Right cardiac atrium (tissue), 5 donors: ENCODE measurements at regions of chrX and their contacts with region 1.

Region 1: GRCh38 chrX:68828740-68829552 is at the start of gene EFNB1:
- DNase-seq: peak; percentile 93 to 97 (median 96)
- ATAC-seq: peak; percentile 95 to 96
- H3K4me3 ChIP-seq: peak within 1 kb of the TSS; percentile 92
- H3K27ac ChIP-seq: peak within 1 kb of the TSS; percentile 99
- H3K4me1 ChIP-seq: no peaks in the 10 kb centered on the region
- H3K27me3 ChIP-seq: no peaks in the 10 kb centered on the region
- total RNA-seq, gene EFNB1: 18.6 to 28.0 (median 24.4) TPM

Region 2: GRCh38 chrX:68894513-68895340 is 65.8 kb after region 1 on chrX:
- intact Hi-C with region 1: loop called in 1 of 4 experiments (anchors 5 kb)
- DNase-seq: peak; percentile 64 to 86 (median 84)
- ATAC-seq: peak; percentile 88 to 92
- H3K4me3 ChIP-seq: peak overlapping the region; percentile 12
- H3K27ac ChIP-seq: peak overlapping the region; percentile 100
- H3K4me1 ChIP-seq: peaks cover 13% of the 10 kb centered on the region
- H3K27me3 ChIP-seq: no peaks in the 10 kb centered on the region

Region 3: DNA sequence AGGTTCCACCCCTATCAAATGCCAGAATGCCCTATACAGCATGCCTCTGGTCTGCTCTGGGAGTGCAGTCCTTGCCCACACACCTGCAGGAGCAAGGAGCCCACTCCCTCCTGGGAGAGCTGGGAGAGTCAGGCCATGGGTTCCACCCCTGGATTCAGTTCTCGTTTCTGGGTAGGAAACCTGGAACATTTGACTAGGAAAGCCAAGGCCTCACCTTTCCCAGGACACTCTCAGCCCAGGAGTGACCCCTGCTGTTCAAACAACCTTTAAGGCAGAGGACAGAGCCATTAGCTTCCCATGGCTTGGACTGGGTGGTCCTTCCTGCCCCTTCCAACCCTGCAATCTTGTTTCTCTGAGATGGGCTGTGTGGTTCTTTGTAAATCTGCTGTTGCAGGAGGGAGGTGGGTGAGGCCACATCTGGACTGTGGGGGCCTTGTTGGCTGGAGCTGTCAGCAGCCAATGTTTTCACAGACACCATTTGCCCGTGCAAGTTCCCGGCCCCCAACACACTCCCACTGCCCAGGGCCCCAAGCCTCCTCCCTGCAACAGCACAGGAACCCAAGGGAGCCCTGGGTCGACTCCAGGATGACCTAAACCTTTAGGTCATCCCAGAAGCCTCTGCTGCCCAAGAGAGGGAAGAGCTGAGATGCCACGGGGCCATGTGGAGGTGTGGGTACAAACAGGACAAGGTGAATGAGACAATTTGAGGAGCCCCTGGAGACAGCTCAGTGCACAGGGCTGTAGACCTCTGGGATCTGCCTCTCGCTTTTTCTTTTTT is 231.9 kb after region 1 on chrX:
- intact Hi-C with region 1: loop called (anchors 5 kb)
- DNase-seq: peak in 1 of 3 donors; percentile 60
- ATAC-seq: peak; percentile 86 to 91
- H3K4me3 ChIP-seq: no peak overlapping the region
- H3K27ac ChIP-seq: no peak overlapping the region
- H3K4me1 ChIP-seq: no peaks in the 10 kb centered on the region
- H3K27me3 ChIP-seq: no peaks in the 10 kb centered on the region

Region 4: DNA sequence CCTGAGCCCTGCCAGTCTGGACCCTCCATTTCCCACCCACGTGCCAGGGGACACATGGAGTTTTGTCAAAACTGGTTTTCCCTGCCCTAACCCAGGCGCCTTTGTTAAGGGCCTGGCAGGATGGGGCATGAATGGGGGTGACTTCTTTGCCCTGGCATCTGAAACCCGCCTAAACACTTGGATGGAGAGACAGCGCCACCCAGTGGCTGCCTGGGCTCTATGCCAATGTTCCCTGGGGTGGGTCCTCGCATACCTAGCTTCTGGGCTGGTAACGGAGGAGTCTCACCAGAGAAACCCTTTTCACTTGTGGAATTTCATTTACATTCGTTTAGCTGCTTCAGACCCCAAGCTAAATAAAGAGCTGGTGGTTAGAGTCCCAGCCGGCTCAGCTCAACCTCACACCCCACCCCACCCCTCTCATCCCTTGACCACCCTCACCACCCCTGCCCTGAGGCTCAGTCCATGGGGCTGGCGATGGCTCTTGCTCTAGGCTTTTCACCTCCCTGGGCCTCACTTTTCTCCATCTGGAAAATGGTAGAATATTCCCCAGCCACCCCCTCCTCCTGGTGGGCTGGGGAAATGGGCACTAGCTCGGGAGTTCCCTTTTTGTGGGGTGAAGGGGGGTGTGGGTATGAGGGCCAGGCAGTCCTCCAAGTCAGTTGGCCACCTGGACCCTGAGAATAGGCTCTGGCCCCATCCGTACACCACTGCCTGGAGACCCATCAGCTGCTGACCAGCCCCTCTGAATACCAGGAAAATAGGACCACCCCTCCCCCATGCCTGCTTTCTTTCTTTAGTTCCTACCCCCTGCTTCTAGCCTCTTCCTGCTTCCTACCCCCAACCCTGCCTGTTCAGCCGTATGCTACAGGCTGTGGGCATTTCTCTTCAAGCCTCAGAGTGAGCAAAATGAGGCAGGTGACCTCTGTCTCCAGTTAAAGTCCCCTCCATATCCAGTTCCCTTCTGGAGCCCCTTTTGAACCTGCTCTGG is 393.5 kb after region 1 on chrX:
- intact Hi-C with region 1: loop called in 3 of 4 experiments (anchors 2 to 5 kb)
- DNase-seq: peak; percentile 64 to 87 (median 86)
- ATAC-seq: peak; percentile 86 to 89
- H3K4me3 ChIP-seq: no peak overlapping the region
- H3K27ac ChIP-seq: no peak overlapping the region
- H3K4me1 ChIP-seq: no peaks in the 10 kb centered on the region
- H3K27me3 ChIP-seq: no peaks in the 10 kb centered on the region

Region 5: GRCh38 chrX:69285881-69286564 is 457.1 kb after region 1 on chrX:
- intact Hi-C with region 1: loop called (anchors 5 to 10 kb)
- DNase-seq: peak; percentile 66 to 91 (median 90)
- ATAC-seq: peak; percentile 78 to 83
- H3K4me3 ChIP-seq: peak overlapping the region; percentile 43
- H3K27ac ChIP-seq: no peak overlapping the region
- H3K4me1 ChIP-seq: peaks cover 4% of the 10 kb centered on the region
- H3K27me3 ChIP-seq: no peaks in the 10 kb centered on the region

Region 6: DNA sequence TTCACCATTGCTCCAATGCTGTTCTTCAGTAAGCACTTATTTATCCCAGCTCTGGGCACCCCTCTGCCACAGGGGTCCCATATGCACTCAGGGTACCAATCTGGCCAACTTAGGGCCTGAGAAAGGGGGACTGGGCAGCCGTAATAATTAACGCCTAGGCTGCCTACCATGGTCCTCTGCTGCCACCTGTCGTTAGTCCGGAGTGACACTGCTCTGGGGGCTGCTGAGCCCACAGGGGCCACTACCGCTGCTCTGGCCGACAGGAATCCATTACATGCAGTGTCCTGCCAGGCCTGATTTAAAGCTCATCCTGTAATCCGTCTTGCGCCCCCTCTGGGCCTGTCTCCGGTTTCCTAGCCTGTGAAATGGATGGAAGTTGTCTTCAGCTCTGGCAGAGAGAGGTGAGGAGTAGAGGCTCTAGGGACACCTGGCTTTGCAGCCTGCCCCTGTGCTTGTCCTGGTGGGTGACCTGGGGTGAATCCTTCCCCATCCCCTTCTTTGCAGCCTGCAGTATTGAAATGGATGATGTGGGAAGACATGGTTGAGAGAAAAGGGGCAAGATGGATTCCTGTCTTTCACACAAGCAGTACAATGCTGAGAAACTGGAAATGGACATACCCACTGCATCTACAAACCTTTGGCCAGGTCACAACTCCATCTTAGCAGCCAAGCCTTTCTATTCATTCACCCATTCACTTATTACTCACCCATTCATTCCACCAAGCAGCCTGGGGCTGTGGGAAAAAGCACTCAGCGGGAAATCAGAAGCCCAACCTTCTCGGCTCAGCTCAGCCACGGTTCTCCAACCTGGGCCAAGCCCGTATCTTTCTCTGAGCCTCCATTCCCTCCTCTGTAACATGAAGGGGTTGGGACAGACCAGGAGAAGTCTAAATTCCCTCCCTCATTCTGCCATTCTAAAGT is 558.9 kb after region 1 on chrX:
- intact Hi-C with region 1: loop called in 3 of 4 experiments (anchors 5 kb)
- DNase-seq: peak; percentile 49 to 73 (median 71)
- ATAC-seq: peak; percentile 72 to 81
- H3K4me3 ChIP-seq: no peak overlapping the region
- H3K27ac ChIP-seq: no peak overlapping the region
- H3K4me1 ChIP-seq: no peaks in the 10 kb centered on the region
- H3K27me3 ChIP-seq: no peaks in the 10 kb centered on the region